IMR-90 (cell line): ENCODE measurements at regions of chr4 and their contacts with region 1.

Region 1: GRCh38 chr4:127809173-127809800 is 27.2 kb downstream of the HSPA4L start:
- DNase-seq: peak; percentile 29
- ATAC-seq: peak; percentile 60
- H3K4me3 ChIP-seq: no peak overlapping the region
- H3K27ac ChIP-seq: no peak overlapping the region
- H3K4me1 ChIP-seq: no peaks in the 10 kb centered on the region
- H3K27me3 ChIP-seq: no peaks in the 10 kb centered on the region
- CTCF ChIP-seq: peak; percentile 25; the same call in 1 of the 2 replicates
- POLR2A ChIP-seq: no peak
- RAD21 ChIP-seq: peak; percentile 27; the same call in 1 of the 2 replicates

Region 2: GRCh38 chr4:127880764-127881562 is 71.7 kb after region 1 on chr4 and contains the start of gene PLK4:
- CTCF ChIA-PET with region 1: no interaction called
- POLR2A ChIA-PET with region 1: no interaction called
- dilution Hi-C with region 1: no loop called
- in situ Hi-C with region 1: no loop called
- intact Hi-C with region 1: loop called (anchors 5 kb)
- DNase-seq: peak; percentile 93
- ATAC-seq: peak; percentile 92
- H3K4me3 ChIP-seq: peak within 1 kb of the TSS; percentile 77
- H3K27ac ChIP-seq: peak within 1 kb of the TSS; percentile 65
- H3K4me1 ChIP-seq: no peaks in the 10 kb centered on the region
- H3K27me3 ChIP-seq: no peaks in the 10 kb centered on the region
- CTCF ChIP-seq: no peak
- POLR2A ChIP-seq: peak; percentile 34; the same call in 1 of the 2 replicates
- RAD21 ChIP-seq: no peak
- total RNA-seq, gene PLK4: 15.1 and 16.1 TPM in 2 replicates